Adrenal gland (tissue), 19 donors: ENCODE measurements at regions of chr5 and their contacts with region 1.

Region 1: GRCh38 chr5:136174021-136174659 is 18.8 kb downstream of the SMIM32 start:
- DNase-seq: peak in 1 of 7 donors; percentile 15
- H3K4me3 ChIP-seq: no peak overlapping the region
- H3K27ac ChIP-seq: no peak overlapping the region
- H3K4me1 ChIP-seq: no peaks in the 10 kb centered on the region
- H3K27me3 ChIP-seq: no peaks in the 10 kb centered on the region
- CTCF ChIP-seq: peak; percentile 33 to 70 (median 66)
- POLR2A ChIP-seq: no peak

Region 2: GRCh38 chr5:136089791-136090190 is 84.3 kb before region 1 on chr5:
- intact Hi-C with region 1: loop called in 1 of 2 experiments (anchors 10 kb)
- DNase-seq: peak; percentile 59 to 86 (median 75)
- H3K4me3 ChIP-seq: no peak overlapping the region
- H3K27ac ChIP-seq: peak overlapping the region in 1 of 5 donors; percentile 92
- H3K4me1 ChIP-seq: peaks cover 5 to 24% of the 10 kb centered on the region in 2 donors
- H3K27me3 ChIP-seq: no peaks in the 10 kb centered on the region
- CTCF ChIP-seq: no peak
- POLR2A ChIP-seq: no peak

Region 3: DNA sequence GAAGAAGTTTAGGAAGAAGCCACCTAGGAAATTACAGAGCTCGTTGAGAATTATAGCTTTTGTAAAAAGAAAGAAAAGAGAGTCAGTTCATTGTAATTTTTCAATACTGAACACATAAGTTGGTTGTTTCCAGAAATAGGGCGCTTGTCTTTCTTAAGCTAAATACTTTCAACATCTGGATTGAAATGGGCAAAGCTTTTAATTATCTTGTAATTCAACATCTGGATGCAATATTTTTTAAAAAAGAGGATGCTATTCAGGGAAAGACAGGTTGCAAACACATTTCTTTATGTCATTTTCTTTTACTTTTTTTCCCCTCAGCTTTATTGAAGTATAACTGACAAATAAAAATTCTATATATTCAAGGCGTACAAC is 291.9 kb after region 1 on chr5:
- intact Hi-C with region 1: no loop called
- DNase-seq: no peak
- H3K4me3 ChIP-seq: no peak overlapping the region
- H3K27ac ChIP-seq: no peak overlapping the region
- H3K4me1 ChIP-seq: no peaks in the 10 kb centered on the region
- H3K27me3 ChIP-seq: peaks cover 7% of the 10 kb centered on the region
- CTCF ChIP-seq: no peak
- POLR2A ChIP-seq: no peak